T-cell (primary cell): ENCODE measurements at regions of chr2 and their contacts with region 1.

Region 1: DNA sequence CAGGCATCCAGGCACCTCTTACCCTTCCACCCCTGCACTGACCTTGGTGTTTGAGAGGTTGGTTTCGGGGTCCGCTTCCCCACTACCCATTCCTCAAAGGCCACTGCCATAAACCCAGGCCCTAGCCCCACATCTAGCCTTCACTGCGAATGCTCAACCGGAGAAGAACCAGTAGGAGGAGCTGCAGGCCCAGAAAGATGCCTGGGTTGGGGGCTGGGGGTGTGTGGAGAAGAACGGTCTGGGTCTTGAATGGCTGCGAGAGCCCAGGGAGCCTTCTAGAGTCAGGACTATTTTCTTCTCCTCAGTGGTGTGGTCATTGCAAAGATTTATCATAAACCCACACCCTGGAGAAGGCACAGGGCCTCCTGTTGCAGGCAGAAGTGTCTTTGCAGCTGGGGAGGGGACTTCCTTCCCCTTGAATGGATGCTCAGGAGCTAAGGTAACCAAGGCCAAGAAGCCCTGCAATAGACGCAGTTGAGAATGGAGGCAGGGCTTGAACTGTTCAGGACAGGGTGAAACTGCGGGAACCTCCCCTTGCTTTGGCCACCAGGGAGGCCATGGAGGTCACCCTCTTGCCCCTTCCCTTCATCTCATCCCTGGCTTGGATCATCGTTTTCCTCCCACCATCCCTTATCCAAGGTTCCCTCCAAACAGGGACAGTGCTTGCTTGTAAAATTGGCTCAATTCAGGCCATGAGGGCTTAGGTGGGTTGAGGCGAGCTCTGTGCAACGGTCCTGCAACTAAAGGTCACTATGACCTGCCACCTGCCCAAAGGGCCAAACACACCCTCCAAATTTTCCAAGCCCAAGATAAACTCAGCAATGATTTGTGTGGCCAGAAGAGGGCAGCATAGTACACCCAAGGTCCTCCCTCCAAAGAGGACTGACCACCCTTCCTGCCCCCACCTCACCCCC is 20.9 kb downstream of the THNSL2 start:
- DNase-seq: peak in 1 of 35 experiments; percentile 45
- ATAC-seq: no peak
- H3K4me3 ChIP-seq: no peak overlapping the region
- H3K4me3 Mint-ChIP-seq: no peak overlapping the region
- H3K27ac ChIP-seq: no peak overlapping the region
- H3K27ac Mint-ChIP-seq: no peak overlapping the region
- H3K4me1 ChIP-seq: no peaks in the 10 kb centered on the region
- H3K4me1 Mint-ChIP-seq: peaks cover 0 to 2% (median 0%) of the 10 kb centered on the region in 3 donors
- H3K27me3 ChIP-seq: peaks cover 0 to 48% of the 10 kb centered on the region in 2 experiments
- H3K27me3 Mint-ChIP-seq: peaks cover 28 to 34% of the 10 kb centered on the region in 2 donors

Region 2: DNA sequence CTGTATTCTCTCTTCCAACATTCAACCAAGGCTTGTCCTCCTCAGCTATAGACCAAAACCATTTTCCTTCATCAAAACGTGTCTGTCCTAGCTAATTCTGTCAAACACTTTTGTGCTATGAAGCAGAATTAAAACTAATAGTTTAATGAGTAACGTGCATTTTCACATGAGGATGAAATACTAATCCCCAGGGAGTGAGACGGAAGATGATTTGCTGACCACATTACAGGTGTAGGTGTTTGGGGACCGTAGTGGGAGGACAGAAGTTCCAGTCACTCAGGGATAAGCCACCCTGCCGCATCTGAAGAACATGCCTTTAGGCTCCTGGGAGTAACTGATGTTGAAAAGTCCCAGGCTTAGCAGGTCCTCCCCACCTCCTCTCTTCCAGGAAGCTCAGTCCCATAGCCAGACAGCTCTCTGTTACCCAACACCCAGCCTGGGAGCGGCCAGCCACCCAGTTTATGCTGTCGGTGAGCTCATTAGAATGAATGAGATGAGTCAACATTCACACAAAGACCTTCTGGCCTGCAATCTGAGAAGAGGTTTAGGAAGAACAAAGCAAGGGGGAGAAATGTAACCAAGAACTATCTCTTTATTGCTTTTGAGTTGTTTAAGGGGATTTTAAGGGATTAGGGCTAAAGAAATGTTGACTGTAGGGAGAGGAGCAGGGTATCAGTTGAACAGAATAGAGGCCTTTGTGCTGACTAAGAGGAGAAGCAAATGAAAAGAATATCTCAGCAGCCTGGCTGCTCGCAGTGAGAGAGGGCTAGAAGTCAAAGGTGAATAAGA is 138.9 kb after region 1 on chr2:
- CTCF ChIA-PET with region 1: no interaction called
- POLR2A ChIA-PET with region 1: no interaction called
- DNase-seq: no peak
- ATAC-seq: no peak
- H3K4me3 ChIP-seq: no peak overlapping the region
- H3K4me3 Mint-ChIP-seq: no peak overlapping the region
- H3K27ac ChIP-seq: no peak overlapping the region
- H3K27ac Mint-ChIP-seq: no peak overlapping the region
- H3K4me1 ChIP-seq: no peaks in the 10 kb centered on the region
- H3K4me1 Mint-ChIP-seq: no peaks in the 10 kb centered on the region
- H3K27me3 ChIP-seq: peaks cover 7 to 13% of the 10 kb centered on the region in 2 experiments
- H3K27me3 Mint-ChIP-seq: peaks cover 14 to 33% of the 10 kb centered on the region in 2 donors

Region 3: GRCh38 chr2:88372042-88372441 is 181.0 kb after region 1 on chr2:
- CTCF ChIA-PET with region 1: interaction called in 1 of 2 experiments, 10 read pairs
- POLR2A ChIA-PET with region 1: no interaction called
- DNase-seq: no peak
- ATAC-seq: no peak
- H3K4me3 ChIP-seq: no peak overlapping the region
- H3K4me3 Mint-ChIP-seq: no peak overlapping the region
- H3K27ac ChIP-seq: no peak overlapping the region
- H3K27ac Mint-ChIP-seq: no peak overlapping the region
- H3K4me1 ChIP-seq: no peaks in the 10 kb centered on the region
- H3K4me1 Mint-ChIP-seq: no peaks in the 10 kb centered on the region
- H3K27me3 ChIP-seq: peaks cover 2 to 8% of the 10 kb centered on the region in 2 experiments
- H3K27me3 Mint-ChIP-seq: peaks cover 17% of the 10 kb centered on the region in 2 donors